ENCODE measurements at regions of chr7 and their contacts with region 1.

Region 1: GRCh38 chr7:92621026-92621540 is 30.9 kb upstream of the FAM133B start:
- DNase-seq: peak; percentile 80
- ATAC-seq: peak; percentile 81
- H3K4me3 ChIP-seq: no peak overlapping the region
- H3K27ac ChIP-seq: peak overlapping the region; percentile 80
- H3K4me1 ChIP-seq: peaks cover 28% of the 10 kb centered on the region
- H3K27me3 ChIP-seq: no peaks in the 10 kb centered on the region
- CTCF ChIP-seq: peak; percentile 83

Region 2: GRCh38 chr7:92517631-92518030 is 103.5 kb before region 1 on chr7:
- CTCF ChIA-PET with region 1: no interaction called
- POLR2A ChIA-PET with region 1: no interaction called
- in situ Hi-C with region 1: no loop called
- intact Hi-C with region 1: no loop called
- DNase-seq: no peak
- ATAC-seq: no peak
- H3K4me3 ChIP-seq: no peak overlapping the region
- H3K27ac ChIP-seq: no peak overlapping the region
- H3K4me1 ChIP-seq: no peaks in the 10 kb centered on the region
- H3K27me3 ChIP-seq: no peaks in the 10 kb centered on the region
- CTCF ChIP-seq: no peak

Region 3: GRCh38 chr7:92674127-92674778 is 53.2 kb after region 1 on chr7:
- CTCF ChIA-PET with region 1: no interaction called
- POLR2A ChIA-PET with region 1: no interaction called
- in situ Hi-C with region 1: no loop called
- intact Hi-C with region 1: loop called (anchors 5 kb)
- DNase-seq: no peak
- ATAC-seq: no peak
- H3K4me3 ChIP-seq: no peak overlapping the region
- H3K27ac ChIP-seq: no peak overlapping the region
- H3K4me1 ChIP-seq: peaks cover 5% of the 10 kb centered on the region; the same call in 1 of the 2 replicates
- H3K27me3 ChIP-seq: no peaks in the 10 kb centered on the region
- CTCF ChIP-seq: no peak

Region 4: GRCh38 chr7:92682903-92683539 is 61.9 kb after region 1 on chr7:
- CTCF ChIA-PET with region 1: no interaction called
- POLR2A ChIA-PET with region 1: interaction called, 10 read pairs
- in situ Hi-C with region 1: no loop called
- intact Hi-C with region 1: no loop called
- DNase-seq: no peak
- ATAC-seq: no peak
- H3K4me3 ChIP-seq: no peak overlapping the region
- H3K27ac ChIP-seq: peak overlapping the region; percentile 31
- H3K4me1 ChIP-seq: peaks cover 20% of the 10 kb centered on the region
- H3K27me3 ChIP-seq: no peaks in the 10 kb centered on the region
- CTCF ChIP-seq: no peak

Region 5: DNA sequence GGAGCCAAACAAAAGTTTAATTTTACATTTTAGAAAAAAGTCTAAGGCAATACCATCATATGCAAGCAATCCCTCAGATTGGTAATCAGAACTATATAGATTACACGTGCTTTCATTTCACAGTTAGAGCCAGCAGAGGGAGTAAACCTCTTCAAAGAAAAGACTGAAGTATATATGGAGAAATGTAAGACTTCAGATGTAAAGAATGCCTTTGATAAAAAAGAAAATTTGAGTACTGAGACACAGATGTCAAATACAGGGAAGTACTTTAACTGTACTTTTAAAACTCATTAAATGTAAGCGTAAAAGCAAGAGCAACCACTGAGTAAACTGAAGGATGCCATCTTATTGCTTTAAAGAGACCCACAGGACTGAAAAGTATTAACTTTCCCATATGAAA is 70.5 kb after region 1 on chr7:
- CTCF ChIA-PET with region 1: no interaction called
- POLR2A ChIA-PET with region 1: no interaction called
- in situ Hi-C with region 1: no loop called
- intact Hi-C with region 1: loop called (anchors 5 kb)
- DNase-seq: peak; percentile 61
- ATAC-seq: peak; percentile 62
- H3K4me3 ChIP-seq: no peak overlapping the region
- H3K27ac ChIP-seq: peak overlapping the region; percentile 65
- H3K4me1 ChIP-seq: peaks cover 22% of the 10 kb centered on the region
- H3K27me3 ChIP-seq: no peaks in the 10 kb centered on the region
- CTCF ChIP-seq: peak; percentile 66; the same call in 1 of the 2 replicates

Region 6: GRCh38 chr7:92833024-92833765 is 212.1 kb after region 1 on chr7:
- CTCF ChIA-PET with region 1: no interaction called
- POLR2A ChIA-PET with region 1: no interaction called
- in situ Hi-C with region 1: no loop called
- intact Hi-C with region 1: loop called (anchors 2 kb)
- DNase-seq: peak; percentile 82
- ATAC-seq: peak; percentile 69
- H3K4me3 ChIP-seq: peak overlapping the region; percentile 94 to 97
- H3K27ac ChIP-seq: peak overlapping the region; percentile 97
- H3K4me1 ChIP-seq: peaks cover 40% of the 10 kb centered on the region
- H3K27me3 ChIP-seq: no peaks in the 10 kb centered on the region; the same call in 1 of the 2 replicates
- CTCF ChIP-seq: peak; percentile 92

Region 7: GRCh38 chr7:93055543-93056107 is 434.5 kb after region 1 on chr7:
- CTCF ChIA-PET with region 1: no interaction called
- POLR2A ChIA-PET with region 1: no interaction called
- in situ Hi-C with region 1: no loop called
- intact Hi-C with region 1: loop called (anchors 2 kb)
- DNase-seq: peak; percentile 22
- ATAC-seq: 0 out of 2 replicates have a peak, but pooled peaks have one; percentile 56
- H3K4me3 ChIP-seq: no peak overlapping the region
- H3K27ac ChIP-seq: peak overlapping the region; percentile 64; the same call in 1 of the 2 replicates
- H3K4me1 ChIP-seq: peaks cover 30% of the 10 kb centered on the region
- H3K27me3 ChIP-seq: 0 out of 2 replicates have a peak, but pooled peaks cover 3% of the 10 kb centered on the region
- CTCF ChIP-seq: peak; percentile 75; the same call in 1 of the 2 replicates

Measured in Panc1 (cell line).